Right lobe of liver (tissue), 6 donors: ENCODE measurements at regions of chr2 and their contacts with region 1.

Region 1: GRCh38 chr2:71798266-71799012 is 345.1 kb downstream of the DYSF start:
- DNase-seq: peak; percentile 59 to 75 (median 72)
- ATAC-seq: peak; percentile 91 to 96 (median 94)
- H3K4me3 ChIP-seq: no peak overlapping the region
- H3K27ac ChIP-seq: no peak overlapping the region
- H3K4me1 ChIP-seq: no peaks in the 10 kb centered on the region
- H3K27me3 ChIP-seq: no peaks in the 10 kb centered on the region
- CTCF ChIP-seq: peak; percentile 80 to 86 (median 86)
- POLR2A ChIP-seq: no peak

Region 2: GRCh38 chr2:71510196-71510807 is 288.1 kb before region 1 on chr2:
- intact Hi-C with region 1: no loop called
- DNase-seq: peak; percentile 67 to 73 (median 72)
- ATAC-seq: peak; percentile 73 to 88 (median 85)
- H3K4me3 ChIP-seq: no peak overlapping the region
- H3K27ac ChIP-seq: no peak overlapping the region
- H3K4me1 ChIP-seq: no peaks in the 10 kb centered on the region
- H3K27me3 ChIP-seq: no peaks in the 10 kb centered on the region
- CTCF ChIP-seq: peak; percentile 87 to 93 (median 90)
- POLR2A ChIP-seq: no peak

Region 3: GRCh38 chr2:71545572-71546274 is 252.7 kb before region 1 on chr2:
- intact Hi-C with region 1: loop called (anchors 5 to 10 kb)
- DNase-seq: peak in 1 of 3 donors; percentile 12
- ATAC-seq: peak; percentile 64 to 71 (median 69)
- H3K4me3 ChIP-seq: no peak overlapping the region
- H3K27ac ChIP-seq: no peak overlapping the region
- H3K4me1 ChIP-seq: no peaks in the 10 kb centered on the region
- H3K27me3 ChIP-seq: no peaks in the 10 kb centered on the region
- CTCF ChIP-seq: peak; percentile 64 to 68 (median 64)
- POLR2A ChIP-seq: no peak

Region 4: GRCh38 chr2:71609958-71610357 is 188.5 kb before region 1 on chr2:
- intact Hi-C with region 1: loop called in 1 of 2 experiments (anchors 10 kb)
- DNase-seq: no peak
- ATAC-seq: peak in 2 of 4 donors; percentile 20 to 41
- H3K4me3 ChIP-seq: no peak overlapping the region
- H3K27ac ChIP-seq: no peak overlapping the region
- H3K4me1 ChIP-seq: peaks cover 0 to 3% (median 0%) of the 10 kb centered on the region in 4 donors
- H3K27me3 ChIP-seq: no peaks in the 10 kb centered on the region
- CTCF ChIP-seq: peak; percentile 34 to 44 (median 40)
- POLR2A ChIP-seq: no peak

Region 5: DNA sequence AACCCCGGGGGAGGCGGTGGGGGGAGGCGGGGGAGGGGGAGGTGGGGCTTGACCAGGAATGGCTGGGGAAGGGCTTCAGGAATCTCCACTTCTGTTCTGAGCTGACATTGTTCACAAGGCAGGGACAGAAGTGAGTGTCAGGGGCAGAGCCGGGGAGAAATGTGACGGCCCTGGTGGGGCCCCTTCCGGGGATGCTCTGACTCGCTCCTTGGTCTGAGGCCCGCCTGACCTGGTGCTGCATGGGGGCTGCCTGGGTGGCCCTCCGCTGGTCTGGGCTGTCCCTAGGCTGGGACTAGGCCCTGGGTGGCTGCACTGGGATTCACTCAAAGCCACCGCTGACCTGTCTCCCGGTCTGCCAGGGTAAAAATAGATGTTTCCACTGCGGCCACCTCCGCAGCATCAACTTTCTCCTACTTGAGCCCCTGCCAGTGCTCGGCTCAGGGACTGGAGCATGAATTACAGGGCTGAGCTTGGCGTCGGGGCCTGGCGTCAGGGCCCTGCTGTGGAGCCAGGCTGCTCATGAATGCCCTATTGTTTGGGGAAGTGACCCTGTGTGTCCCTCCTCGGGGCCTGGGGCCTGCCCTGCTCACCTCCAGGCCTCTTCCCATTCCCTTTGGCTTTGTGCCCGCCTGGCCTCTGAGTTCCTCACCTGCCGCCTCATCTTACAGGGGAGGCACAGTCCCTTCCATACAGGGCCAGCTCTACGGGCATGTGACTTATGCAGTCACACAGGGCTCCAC is 97.6 kb before region 1 on chr2:
- intact Hi-C with region 1: no loop called
- DNase-seq: peak in 1 of 3 donors; percentile 60
- ATAC-seq: no peak
- H3K4me3 ChIP-seq: no peak overlapping the region
- H3K27ac ChIP-seq: no peak overlapping the region
- H3K4me1 ChIP-seq: no peaks in the 10 kb centered on the region
- H3K27me3 ChIP-seq: no peaks in the 10 kb centered on the region
- CTCF ChIP-seq: no peak
- POLR2A ChIP-seq: no peak

Region 6: GRCh38 chr2:72024451-72025175 is 226.2 kb after region 1 on chr2:
- intact Hi-C with region 1: no loop called
- DNase-seq: peak in 2 of 3 donors; percentile 22 to 33
- ATAC-seq: no peak
- H3K4me3 ChIP-seq: no peak overlapping the region
- H3K27ac ChIP-seq: no peak overlapping the region
- H3K4me1 ChIP-seq: no peaks in the 10 kb centered on the region
- H3K27me3 ChIP-seq: no peaks in the 10 kb centered on the region
- CTCF ChIP-seq: no peak
- POLR2A ChIP-seq: no peak